ENCODE measurements at regions of chr1 and their contacts with region 1.

Region 1: DNA sequence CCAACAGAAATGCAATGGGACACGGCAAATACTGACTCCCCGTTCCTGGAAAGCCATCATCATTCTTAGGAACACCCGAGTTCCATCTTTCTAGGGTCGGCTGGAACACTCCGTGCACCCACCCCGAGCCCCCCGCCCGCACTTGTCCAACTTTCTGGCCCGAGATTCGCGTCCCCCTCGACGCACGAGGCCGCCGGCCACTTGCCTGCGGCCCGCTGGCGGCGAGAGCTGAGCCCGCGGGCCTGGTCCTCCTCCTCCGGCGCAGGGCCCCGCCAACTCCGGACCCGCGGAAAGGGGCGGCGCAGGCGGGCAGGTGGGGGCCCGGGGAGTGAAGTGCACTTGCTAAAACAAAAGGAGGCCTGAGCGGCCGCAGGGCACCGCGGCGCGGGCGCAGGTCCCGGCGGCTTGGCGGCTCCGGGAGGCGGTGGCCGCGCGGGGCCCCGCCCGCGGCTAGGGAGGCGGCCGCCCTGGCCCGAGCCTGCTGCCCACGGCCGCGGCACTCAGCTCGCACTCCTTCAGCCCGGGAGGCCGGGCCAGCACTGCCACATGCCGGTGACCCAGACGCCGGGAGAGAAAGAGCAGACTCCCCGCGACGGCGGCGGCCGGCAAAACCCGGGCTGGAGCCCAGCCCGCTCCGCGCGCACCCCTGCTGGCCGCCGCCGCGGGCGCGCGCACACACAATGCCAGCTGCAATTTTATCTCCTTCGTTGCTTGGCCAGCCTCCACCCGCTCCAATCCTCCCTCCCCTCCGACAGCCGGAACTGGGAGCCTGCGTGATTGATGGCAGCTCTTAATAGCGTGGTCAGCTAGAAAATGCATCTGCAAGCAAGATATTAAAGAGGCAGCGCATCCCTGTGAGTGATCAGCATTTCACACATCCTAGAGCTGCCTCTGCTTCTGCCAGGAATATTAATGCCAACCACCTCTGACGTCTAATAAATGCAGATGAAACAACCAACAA is 114.3 kb downstream of the RERE start:
- DNase-seq: peak in 7 of 9 donors; percentile 22 to 83 (median 40)
- ATAC-seq: peak; percentile 72
- H3K4me3 ChIP-seq: peak overlapping the region; percentile 28
- H3K4me3 Mint-ChIP-seq: peak overlapping the region; percentile 79 to 92 (median 86)
- H3K27ac ChIP-seq: no peak overlapping the region
- H3K27ac Mint-ChIP-seq: peak overlapping the region in 6 of 9 donors; percentile 8 to 89 (median 48)
- H3K4me1 ChIP-seq: peaks cover 19 to 23% of the 10 kb centered on the region in 2 donors
- H3K4me1 Mint-ChIP-seq: peaks cover 19 to 53% (median 30%) of the 10 kb centered on the region in 7 donors
- H3K27me3 ChIP-seq: peaks cover 3 to 27% of the 10 kb centered on the region in 2 donors
- H3K27me3 Mint-ChIP-seq: peaks cover 9 to 56% (median 54%) of the 10 kb centered on the region in 5 donors

Region 2: GRCh38 chr1:8182034-8182761 is 520.9 kb before region 1 on chr1:
- CTCF ChIA-PET with region 1: no interaction called
- POLR2A ChIA-PET with region 1: no interaction called
- intact Hi-C with region 1: no loop called
- DNase-seq: peak in 7 of 9 donors; percentile 29 to 78 (median 64)
- ATAC-seq: peak; percentile 90
- H3K4me3 ChIP-seq: peak overlapping the region; percentile 21
- H3K4me3 Mint-ChIP-seq: peak overlapping the region in 9 of 10 donors; percentile 36 to 76 (median 58)
- H3K27ac ChIP-seq: no peak overlapping the region
- H3K27ac Mint-ChIP-seq: peak overlapping the region; percentile 46 to 93 (median 80)
- H3K4me1 ChIP-seq: peaks cover 12 to 16% of the 10 kb centered on the region in 2 donors
- H3K4me1 Mint-ChIP-seq: peaks cover 0 to 21% (median 19%) of the 10 kb centered on the region in 7 donors
- H3K27me3 ChIP-seq: no peaks in the 10 kb centered on the region
- H3K27me3 Mint-ChIP-seq: peaks cover 0 to 3% (median 0%) of the 10 kb centered on the region in 5 donors

Region 3: DNA sequence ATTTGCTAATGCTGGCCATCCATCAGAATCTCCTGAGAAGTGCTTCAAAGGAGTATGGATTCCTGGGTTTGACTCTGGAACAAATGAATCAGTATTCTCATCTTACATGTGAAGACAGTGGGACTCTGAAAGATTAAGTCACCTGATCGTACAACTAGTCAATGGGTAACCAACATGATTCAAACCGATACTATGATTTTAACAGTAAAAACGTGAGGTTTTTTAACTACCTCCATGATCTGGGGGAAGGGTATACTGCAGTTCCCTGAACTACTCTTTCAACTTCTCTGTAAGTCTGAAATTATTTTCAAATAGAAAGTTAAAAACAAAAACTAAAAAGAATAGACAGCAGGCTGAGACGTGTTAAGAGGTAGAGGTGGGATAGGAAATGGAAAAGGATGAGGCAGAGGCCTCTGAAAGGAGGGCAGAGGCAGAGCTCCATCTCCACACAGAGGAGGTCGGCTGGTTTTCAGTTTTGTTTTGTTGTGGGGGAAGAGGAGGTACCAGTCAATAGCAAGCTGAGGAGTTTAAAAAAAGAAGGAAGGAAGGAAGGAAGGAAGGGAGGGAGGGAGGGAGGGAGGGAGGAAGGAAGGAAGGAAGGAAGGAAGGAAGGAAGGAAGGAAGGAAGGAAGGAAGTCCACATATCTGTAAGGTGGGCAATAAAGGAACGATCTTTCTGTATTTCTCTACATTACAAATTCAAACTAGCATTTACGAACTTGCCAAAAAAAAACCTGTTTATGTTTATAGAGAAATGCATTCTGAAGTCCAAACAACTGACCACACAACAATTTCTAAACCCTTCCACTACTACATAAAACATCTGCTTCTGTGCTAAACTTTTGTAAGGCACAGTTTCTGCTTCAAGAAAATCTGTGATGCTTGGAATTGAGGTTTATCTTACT is 98.8 kb before region 1 on chr1:
- CTCF ChIA-PET with region 1: interaction called, 4 read pairs
- POLR2A ChIA-PET with region 1: no interaction called
- intact Hi-C with region 1: loop called in 1 of 2 experiments (anchors 1 kb)
- DNase-seq: peak in 3 of 9 donors; percentile 10 to 43 (median 10)
- ATAC-seq: peak; percentile 45
- H3K4me3 ChIP-seq: no peak overlapping the region
- H3K4me3 Mint-ChIP-seq: peak overlapping the region; percentile 42 to 78 (median 67)
- H3K27ac ChIP-seq: peak overlapping the region; percentile 37
- H3K27ac Mint-ChIP-seq: peak overlapping the region; percentile 27 to 88 (median 77)
- H3K4me1 ChIP-seq: peaks cover 17 to 18% of the 10 kb centered on the region in 2 donors
- H3K4me1 Mint-ChIP-seq: peaks cover 24 to 51% (median 38%) of the 10 kb centered on the region in 7 donors
- H3K27me3 ChIP-seq: no peaks in the 10 kb centered on the region
- H3K27me3 Mint-ChIP-seq: no peaks in the 10 kb centered on the region

Region 4: DNA sequence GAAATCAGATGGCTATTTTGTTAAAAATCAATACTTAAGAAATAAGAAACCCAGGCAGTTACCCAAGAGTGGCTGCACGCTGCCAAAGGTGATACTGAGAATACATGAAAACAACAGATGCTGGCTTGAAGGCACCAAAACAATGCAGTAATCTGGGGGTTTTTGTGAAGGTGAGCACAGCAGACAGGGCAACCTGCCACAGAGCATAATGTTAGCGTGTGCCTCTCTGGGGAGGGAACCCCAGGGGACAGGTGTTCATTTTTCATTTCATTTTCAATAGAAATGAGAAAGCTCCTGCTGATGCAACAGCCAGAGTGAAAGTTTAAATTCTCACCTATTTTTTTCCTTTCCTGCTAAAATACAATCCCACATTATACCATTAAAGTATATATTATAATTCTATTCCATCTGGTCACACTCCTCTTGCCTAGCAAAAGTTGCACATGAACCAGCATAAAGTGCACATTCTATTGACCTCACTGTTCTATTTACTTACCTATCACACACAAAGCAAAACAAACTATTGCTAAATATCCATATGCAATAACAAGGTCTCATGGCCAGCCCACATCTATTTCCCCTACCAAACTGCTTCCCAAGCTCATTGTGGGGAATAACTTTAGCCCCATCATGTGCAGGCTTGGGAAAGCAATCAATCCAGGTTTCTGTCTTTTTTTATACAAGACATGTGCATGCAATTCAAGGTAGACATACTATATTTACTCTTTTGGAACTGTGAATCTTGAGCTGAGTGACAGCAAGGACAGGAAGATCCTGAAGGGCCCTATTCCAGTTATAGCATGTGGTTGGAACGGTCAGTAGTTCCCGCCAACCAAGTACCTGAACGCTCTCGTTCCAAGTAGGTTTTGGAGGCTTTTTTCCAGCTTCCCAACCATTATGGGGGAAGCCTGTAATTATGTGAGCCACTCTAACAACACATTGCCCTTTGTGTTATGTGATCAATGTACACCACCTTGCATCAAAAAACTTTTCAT is 59.3 kb before region 1 on chr1:
- CTCF ChIA-PET with region 1: no interaction called
- POLR2A ChIA-PET with region 1: no interaction called
- intact Hi-C with region 1: no loop called
- DNase-seq: no peak
- ATAC-seq: peak; percentile 42
- H3K4me3 ChIP-seq: no peak overlapping the region
- H3K4me3 Mint-ChIP-seq: no peak overlapping the region
- H3K27ac ChIP-seq: no peak overlapping the region
- H3K27ac Mint-ChIP-seq: no peak overlapping the region
- H3K4me1 ChIP-seq: no peaks in the 10 kb centered on the region
- H3K4me1 Mint-ChIP-seq: peaks cover 0 to 44% (median 0%) of the 10 kb centered on the region in 7 donors
- H3K27me3 ChIP-seq: no peaks in the 10 kb centered on the region
- H3K27me3 Mint-ChIP-seq: no peaks in the 10 kb centered on the region

Region 5: DNA sequence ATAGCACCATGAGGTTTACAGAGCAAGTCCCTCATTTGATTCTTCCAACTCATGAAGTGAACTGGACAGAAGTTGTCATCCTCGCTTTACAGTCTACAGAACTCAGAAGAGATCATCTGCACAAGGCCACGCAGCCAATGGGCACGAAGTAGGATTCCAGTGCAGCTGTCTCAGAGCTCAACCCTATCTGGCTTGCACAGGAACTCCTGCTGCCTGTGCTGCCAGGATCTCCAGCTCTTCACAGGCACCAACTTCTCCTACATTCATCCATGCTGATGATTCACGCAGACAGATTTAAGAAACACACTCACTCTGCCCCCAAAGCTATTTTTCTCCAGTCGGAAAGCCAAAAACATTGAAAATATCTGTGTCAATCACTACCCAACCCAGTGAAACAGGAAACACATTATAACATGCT is 42.7 kb before region 1 on chr1:
- CTCF ChIA-PET with region 1: no interaction called
- POLR2A ChIA-PET with region 1: no interaction called
- intact Hi-C with region 1: loop called in 1 of 2 experiments (anchors 2 kb)
- DNase-seq: no peak
- ATAC-seq: peak; percentile 24
- H3K4me3 ChIP-seq: peak overlapping the region; percentile 20
- H3K4me3 Mint-ChIP-seq: no peak overlapping the region
- H3K27ac ChIP-seq: no peak overlapping the region
- H3K27ac Mint-ChIP-seq: no peak overlapping the region
- H3K4me1 ChIP-seq: peaks cover 0 to 41% of the 10 kb centered on the region in 2 donors
- H3K4me1 Mint-ChIP-seq: peaks cover 0 to 6% (median 5%) of the 10 kb centered on the region in 7 donors
- H3K27me3 ChIP-seq: no peaks in the 10 kb centered on the region
- H3K27me3 Mint-ChIP-seq: no peaks in the 10 kb centered on the region

Region 6: GRCh38 chr1:8817406-8818324 is 114.5 kb after region 1 on chr1 and contains the start of gene RERE:
- CTCF ChIA-PET with region 1: no interaction called
- POLR2A ChIA-PET with region 1: interaction called, 3 read pairs
- intact Hi-C with region 1: loop called (anchors 2 to 5 kb)
- DNase-seq: peak; percentile 92 to 100 (median 99)
- ATAC-seq: peak; percentile 99
- H3K4me3 ChIP-seq: peak within 1 kb of the TSS; percentile 96
- H3K4me3 Mint-ChIP-seq: peak within 1 kb of the TSS; percentile 84 to 99 (median 92)
- H3K27ac ChIP-seq: peak within 1 kb of the TSS; percentile 96
- H3K27ac Mint-ChIP-seq: peak within 1 kb of the TSS; percentile 83 to 99 (median 95)
- H3K4me1 ChIP-seq: peaks cover 10 to 15% of the 10 kb centered on the region in 2 donors
- H3K4me1 Mint-ChIP-seq: peaks cover 26 to 46% (median 41%) of the 10 kb centered on the region in 7 donors
- H3K27me3 ChIP-seq: no peaks in the 10 kb centered on the region
- H3K27me3 Mint-ChIP-seq: peaks cover 0 to 23% (median 0%) of the 10 kb centered on the region in 5 donors
- total RNA-seq, gene RERE: 75.6 to 114 (median 107) TPM

Region 7: GRCh38 chr1:9213956-9214355 is 510.8 kb after region 1 on chr1:
- CTCF ChIA-PET with region 1: no interaction called
- POLR2A ChIA-PET with region 1: no interaction called
- intact Hi-C with region 1: no loop called
- DNase-seq: no peak
- ATAC-seq: no peak
- H3K4me3 ChIP-seq: no peak overlapping the region
- H3K4me3 Mint-ChIP-seq: no peak overlapping the region
- H3K27ac ChIP-seq: no peak overlapping the region
- H3K27ac Mint-ChIP-seq: no peak overlapping the region
- H3K4me1 ChIP-seq: no peaks in the 10 kb centered on the region
- H3K4me1 Mint-ChIP-seq: peaks cover 0 to 2% (median 0%) of the 10 kb centered on the region in 7 donors
- H3K27me3 ChIP-seq: no peaks in the 10 kb centered on the region
- H3K27me3 Mint-ChIP-seq: peaks cover 5 to 26% (median 9%) of the 10 kb centered on the region in 5 donors

Measured in naive thymus-derived CD4-positive, alpha-beta T cell (primary cell).